ENCODE measurements at regions of chr20 and their contacts with region 1.

Region 1: DNA sequence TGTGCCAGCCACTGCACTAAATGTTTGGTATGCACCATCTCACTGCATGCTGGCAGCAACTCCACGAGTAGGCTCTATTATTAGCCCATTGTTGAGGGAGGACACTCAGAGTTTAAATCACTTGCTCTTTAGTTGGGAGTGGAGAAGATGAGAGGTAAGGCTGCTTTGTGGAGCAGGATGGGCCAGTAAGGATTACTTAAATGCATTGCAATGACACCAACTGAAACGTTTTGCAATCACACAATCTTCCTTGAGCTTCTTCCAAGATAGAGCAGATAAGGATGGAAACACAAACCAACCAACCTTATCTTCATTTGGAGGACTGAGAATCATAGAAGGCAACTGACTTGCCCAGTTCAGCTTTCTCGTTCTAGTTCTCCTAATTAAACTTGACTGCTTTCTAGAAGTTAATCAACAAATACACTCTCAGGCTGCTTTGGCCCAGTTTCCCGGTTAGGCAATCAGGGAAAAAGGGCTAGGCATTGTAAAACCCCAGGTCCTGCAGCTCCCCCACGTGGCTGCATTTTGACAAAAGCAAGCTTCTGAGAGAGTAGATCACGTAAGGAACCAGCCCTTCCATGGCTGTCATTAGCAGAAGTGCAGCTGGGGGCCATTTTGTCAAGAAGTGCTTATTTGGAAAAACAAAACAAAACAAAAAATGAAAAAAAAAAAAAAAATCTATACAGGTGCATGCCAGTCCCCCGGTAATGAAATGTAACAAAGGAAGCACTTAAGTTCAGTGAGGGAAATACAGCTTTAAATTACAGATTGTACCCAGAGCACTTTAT is 130.6 kb downstream of the BCAS1 start:
- DNase-seq: peak; percentile 87
- H3K4me3 Mint-ChIP-seq: no peak overlapping the region
- H3K27ac Mint-ChIP-seq: no peak overlapping the region
- H3K4me1 Mint-ChIP-seq: peaks cover 28% of the 10 kb centered on the region
- H3K27me3 Mint-ChIP-seq: no peaks in the 10 kb centered on the region

Region 2: GRCh38 chr20:53413186-53413631 is 526.6 kb before region 1 on chr20:
- CTCF ChIA-PET with region 1: interaction called, 5 read pairs
- POLR2A ChIA-PET with region 1: no interaction called
- intact Hi-C with region 1: loop called (anchors 2 kb)
- DNase-seq: peak; percentile 68
- H3K4me3 Mint-ChIP-seq: no peak overlapping the region
- H3K27ac Mint-ChIP-seq: no peak overlapping the region
- H3K4me1 Mint-ChIP-seq: peaks cover 6% of the 10 kb centered on the region
- H3K27me3 Mint-ChIP-seq: no peaks in the 10 kb centered on the region

Region 3: DNA sequence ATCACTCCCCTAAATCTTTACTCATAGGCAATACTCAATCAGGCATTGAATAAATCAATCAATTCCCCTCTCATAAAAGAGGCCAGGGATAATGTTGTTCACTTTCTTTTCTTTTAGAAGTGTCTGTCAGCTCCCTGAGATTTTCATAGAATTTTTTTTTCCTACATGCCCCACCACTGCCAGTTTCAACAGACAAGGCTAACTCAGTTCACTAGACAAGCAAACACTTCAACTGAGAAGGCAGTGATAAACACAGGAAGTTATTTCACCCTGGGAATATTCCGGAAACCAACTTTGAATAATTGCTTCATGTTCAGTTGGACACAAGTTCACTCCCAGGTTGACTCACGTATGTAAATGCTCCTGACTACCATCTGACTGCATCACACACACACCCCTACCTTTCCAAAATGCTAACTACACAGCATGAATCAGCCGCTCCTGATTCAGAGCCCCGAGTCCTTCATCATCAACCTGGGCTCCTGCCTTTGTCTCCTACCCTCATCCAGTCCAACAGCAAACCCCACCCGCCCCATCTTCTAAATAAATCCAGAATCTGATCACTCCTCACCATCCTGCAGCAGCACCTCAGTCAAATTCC is 13.2 kb before region 1 on chr20:
- CTCF ChIA-PET with region 1: interaction called, 10 read pairs
- POLR2A ChIA-PET with region 1: interaction called, 3 read pairs
- intact Hi-C with region 1: no loop called
- DNase-seq: peak; percentile 64
- H3K4me3 Mint-ChIP-seq: no peak overlapping the region
- H3K27ac Mint-ChIP-seq: peak overlapping the region; percentile 30
- H3K4me1 Mint-ChIP-seq: peaks cover 35% of the 10 kb centered on the region
- H3K27me3 Mint-ChIP-seq: no peaks in the 10 kb centered on the region

Region 4: DNA sequence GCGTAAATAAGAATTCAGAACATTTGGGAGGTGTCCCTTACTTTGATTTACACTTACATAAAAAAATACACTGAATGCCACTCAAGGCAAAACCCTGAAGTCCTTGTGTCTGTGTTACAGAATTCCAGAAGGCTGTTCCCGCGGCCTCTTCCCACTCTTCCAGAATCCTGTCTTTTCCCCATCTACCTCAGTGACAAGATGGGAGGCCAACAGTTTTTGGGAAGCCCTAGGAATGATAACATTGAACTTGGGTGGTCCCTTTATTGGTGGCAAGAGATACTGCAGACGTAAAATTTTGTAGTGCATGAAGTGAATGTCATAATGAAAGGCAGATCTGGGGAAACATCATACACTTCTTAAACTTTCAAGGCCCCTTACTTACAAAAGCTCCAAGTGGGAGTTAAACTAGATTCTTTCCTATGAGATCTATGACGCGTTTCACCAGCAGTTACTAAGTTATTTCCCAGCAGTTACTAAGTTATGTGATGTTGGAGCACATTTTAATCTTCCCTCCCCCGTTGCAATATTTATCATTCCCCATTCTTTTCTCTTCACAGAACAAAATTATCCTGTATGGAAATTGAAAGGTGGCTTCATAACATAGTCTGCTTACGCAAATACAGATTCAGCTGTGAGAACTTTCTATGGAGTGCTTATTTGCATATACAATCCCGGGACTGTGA is 51.1 kb after region 1 on chr20:
- CTCF ChIA-PET with region 1: no interaction called
- POLR2A ChIA-PET with region 1: no interaction called
- intact Hi-C with region 1: no loop called
- DNase-seq: no peak
- H3K4me3 Mint-ChIP-seq: no peak overlapping the region
- H3K27ac Mint-ChIP-seq: no peak overlapping the region
- H3K4me1 Mint-ChIP-seq: no peaks in the 10 kb centered on the region
- H3K27me3 Mint-ChIP-seq: peaks cover 21% of the 10 kb centered on the region

Measured in activated CD4-positive, alpha-beta memory T cell treated with anti-CD3 and anti-CD28 coated beads for 36 hours (primary cell).